PC-9 (cell line): ENCODE measurements at regions of chr1 and their contacts with region 1.

Region 1: DNA sequence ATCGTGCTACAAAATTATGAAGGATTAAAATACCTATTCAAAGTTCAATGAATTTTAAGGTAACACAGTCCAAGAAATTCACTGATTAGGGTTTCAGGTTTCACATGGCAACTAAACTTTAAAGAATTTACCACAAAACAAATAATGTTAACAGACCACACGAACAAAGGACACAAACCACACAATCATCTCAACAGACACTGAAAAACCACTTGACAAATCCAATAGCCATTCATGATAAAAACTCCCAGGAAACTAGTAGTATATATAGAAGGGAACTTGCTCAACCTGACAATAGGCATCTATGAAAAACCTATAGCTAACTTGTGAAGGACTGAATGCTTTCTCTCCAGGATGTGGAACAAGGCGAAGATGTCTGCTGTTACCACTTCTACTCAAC is 21.1 kb upstream of the SH2D5 start:
- DNase-seq: no peak
- H3K4me3 ChIP-seq: no peak overlapping the region
- H3K27ac ChIP-seq: no peak overlapping the region
- H3K4me1 ChIP-seq: no peaks in the 10 kb centered on the region
- H3K27me3 ChIP-seq: no peaks in the 10 kb centered on the region
- CTCF ChIP-seq: no peak

Region 2: DNA sequence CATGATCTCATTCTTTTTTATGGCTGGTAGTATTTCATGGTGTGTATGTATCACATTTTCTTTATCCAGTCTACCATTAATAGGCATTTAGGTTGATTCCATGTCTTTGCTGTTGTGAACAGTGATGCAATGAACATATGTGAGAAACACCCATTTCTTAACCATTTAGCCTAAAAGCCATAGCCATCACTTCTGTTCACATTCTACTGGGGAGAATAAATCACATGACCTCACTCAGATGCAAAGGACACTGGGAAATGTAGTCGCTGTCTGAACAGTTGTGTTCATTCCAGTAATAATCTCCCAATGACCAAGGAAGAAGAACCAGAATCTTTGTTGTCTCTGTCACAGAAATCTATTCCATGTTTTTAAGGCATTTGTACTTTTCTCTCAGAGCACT is 815.1 kb before region 1 on chr1:
- CTCF ChIA-PET with region 1: no interaction called
- POLR2A ChIA-PET with region 1: interaction called, 15 read pairs
- intact Hi-C with region 1: no loop called
- DNase-seq: no peak
- H3K4me3 ChIP-seq: no peak overlapping the region
- H3K27ac ChIP-seq: no peak overlapping the region
- H3K4me1 ChIP-seq: no peaks in the 10 kb centered on the region
- H3K27me3 ChIP-seq: no peaks in the 10 kb centered on the region
- CTCF ChIP-seq: no peak